Activated T-helper 1 cell treated with anti-CD3 and anti-CD28 coated beads, Interleukin-12 subunit alpha, Interleukin-12 subunit beta, Interleukin-2, Interleukin-4 antibody, amounts not matched to agents 30 ng/mL and 10 ng/mL and 1 ng/mL, durations not matched to agents 14 hours and 24 hours and 36 hours (primary cell): ENCODE measurements at regions of chr22 and their contacts with region 1.

Region 1: GRCh38 chr22:49767355-49768062 is 60.2 kb downstream of the BRD1 start:
- DNase-seq: peak; percentile 28
- H3K4me3 Mint-ChIP-seq: no peak overlapping the region
- H3K27ac Mint-ChIP-seq: no peak overlapping the region
- H3K4me1 Mint-ChIP-seq: peaks cover 9% of the 10 kb centered on the region
- H3K27me3 Mint-ChIP-seq: no peaks in the 10 kb centered on the region

Region 2: DNA sequence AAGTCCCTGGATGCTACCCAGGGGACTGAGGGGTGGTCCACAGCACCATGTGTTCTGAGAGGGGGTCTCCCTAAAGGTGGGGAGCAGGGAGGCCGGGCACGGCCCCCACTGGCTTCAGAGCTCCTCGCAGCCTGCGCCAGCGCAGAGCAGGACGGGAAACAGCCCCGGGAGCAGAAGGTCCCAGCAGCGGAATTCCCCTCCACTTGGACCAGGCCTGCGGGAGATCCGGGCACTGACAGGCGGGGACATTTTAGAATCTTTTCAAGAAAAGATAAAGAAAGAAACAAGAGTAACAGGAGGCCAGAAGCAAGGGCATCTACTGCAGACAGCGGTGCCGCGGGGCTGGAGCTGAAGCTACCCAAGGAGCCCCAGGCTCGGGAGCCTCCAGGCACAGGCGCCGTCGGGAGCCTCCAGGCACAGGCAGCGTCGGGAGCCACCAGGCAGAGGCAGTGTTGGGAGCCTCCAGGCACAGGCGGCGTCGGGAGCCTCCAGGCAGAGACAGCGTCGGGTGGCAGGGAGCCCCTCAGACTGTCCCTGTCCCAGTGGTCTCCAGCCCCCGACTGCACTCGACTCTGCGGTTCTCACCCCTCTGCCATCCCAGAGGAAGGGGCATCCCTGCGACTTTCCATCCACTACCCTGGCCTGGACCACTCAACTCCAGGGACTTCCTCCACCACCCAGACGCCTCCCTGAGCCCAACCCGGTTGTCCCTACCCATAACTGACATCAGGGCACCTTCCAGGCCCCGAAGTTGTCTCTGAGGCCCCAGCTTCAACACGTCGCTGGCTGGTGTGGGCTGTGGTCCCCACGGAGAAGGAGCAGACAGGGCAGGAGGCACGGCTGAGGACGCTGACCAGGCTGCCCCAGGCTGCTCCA is 150.9 kb before region 1 on chr22:
- intact Hi-C with region 1: no loop called
- DNase-seq: no peak
- H3K4me3 Mint-ChIP-seq: no peak overlapping the region
- H3K27ac Mint-ChIP-seq: no peak overlapping the region
- H3K4me1 Mint-ChIP-seq: no peaks in the 10 kb centered on the region
- H3K27me3 Mint-ChIP-seq: peaks cover 1% of the 10 kb centered on the region

Region 3: GRCh38 chr22:49807780-49808708 is 40.5 kb after region 1 on chr22:
- intact Hi-C with region 1: loop called (anchors 5 kb)
- DNase-seq: peak; percentile 48
- H3K4me3 Mint-ChIP-seq: peak overlapping the region; percentile 70
- H3K27ac Mint-ChIP-seq: peak overlapping the region; percentile 80
- H3K4me1 Mint-ChIP-seq: peaks cover 63% of the 10 kb centered on the region
- H3K27me3 Mint-ChIP-seq: no peaks in the 10 kb centered on the region

Region 4: DNA sequence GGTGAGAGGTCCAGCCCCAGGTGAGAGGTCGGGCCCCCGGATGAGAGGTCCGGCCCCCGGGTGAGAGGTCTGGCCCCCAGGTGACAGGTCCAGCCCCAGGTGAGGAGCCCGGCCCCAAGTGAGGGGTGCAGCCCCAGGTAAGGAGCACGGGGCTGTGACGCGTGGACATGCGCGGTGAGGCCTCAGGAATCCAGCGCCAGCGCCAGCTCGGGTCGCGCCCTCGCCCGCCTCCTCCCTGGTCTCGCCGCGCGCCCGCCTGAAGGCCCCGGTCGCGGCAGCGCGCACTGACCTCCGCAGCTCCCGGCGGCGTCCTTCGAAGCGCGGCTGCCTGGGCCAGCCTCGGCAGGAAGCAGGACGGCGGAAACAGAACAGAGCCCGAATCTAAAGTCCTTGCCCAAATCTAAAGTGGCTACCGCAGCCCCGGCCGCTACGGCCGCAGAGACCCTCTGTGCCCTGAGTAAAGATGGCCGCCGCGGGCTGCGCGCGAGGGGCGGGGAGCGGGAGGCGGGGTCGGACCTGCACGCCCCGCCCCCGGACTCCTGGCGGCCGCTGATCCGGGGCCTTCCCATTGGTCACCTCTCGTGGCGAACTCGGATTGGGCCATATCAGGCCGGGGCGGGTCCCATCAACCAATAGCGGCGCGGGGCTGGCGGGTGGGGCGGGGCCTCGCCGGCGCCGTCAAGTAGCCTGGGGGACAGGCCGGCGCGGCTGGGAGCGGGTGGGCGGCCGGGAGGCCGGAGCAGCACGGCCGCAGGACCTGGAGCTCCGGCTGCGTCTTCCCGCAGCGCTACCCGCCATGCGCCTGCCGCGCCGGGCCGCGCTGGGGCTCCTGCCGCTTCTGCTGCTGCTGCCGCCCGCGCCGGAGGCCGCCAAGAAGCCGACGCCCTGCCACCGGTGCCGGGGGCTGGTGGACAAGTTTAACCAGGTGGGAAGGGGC is 150.7 kb after region 1 on chr22 and contains the starts of genes ALG12 and CRELD2:
- intact Hi-C with region 1: loop called (anchors 1 kb)
- DNase-seq: peak; percentile 96
- H3K4me3 Mint-ChIP-seq: peak within 1 kb of the TSS; percentile 89
- H3K27ac Mint-ChIP-seq: peak within 1 kb of the TSS; percentile 87
- H3K4me1 Mint-ChIP-seq: peaks cover 16% of the 10 kb centered on the region
- H3K27me3 Mint-ChIP-seq: no peaks in the 10 kb centered on the region
- total RNA-seq, gene ALG12: 13.1 and 18.5 TPM in 2 replicates
- total RNA-seq, gene CRELD2: 48.1 and 51.0 TPM in 2 replicates

Region 5: DNA sequence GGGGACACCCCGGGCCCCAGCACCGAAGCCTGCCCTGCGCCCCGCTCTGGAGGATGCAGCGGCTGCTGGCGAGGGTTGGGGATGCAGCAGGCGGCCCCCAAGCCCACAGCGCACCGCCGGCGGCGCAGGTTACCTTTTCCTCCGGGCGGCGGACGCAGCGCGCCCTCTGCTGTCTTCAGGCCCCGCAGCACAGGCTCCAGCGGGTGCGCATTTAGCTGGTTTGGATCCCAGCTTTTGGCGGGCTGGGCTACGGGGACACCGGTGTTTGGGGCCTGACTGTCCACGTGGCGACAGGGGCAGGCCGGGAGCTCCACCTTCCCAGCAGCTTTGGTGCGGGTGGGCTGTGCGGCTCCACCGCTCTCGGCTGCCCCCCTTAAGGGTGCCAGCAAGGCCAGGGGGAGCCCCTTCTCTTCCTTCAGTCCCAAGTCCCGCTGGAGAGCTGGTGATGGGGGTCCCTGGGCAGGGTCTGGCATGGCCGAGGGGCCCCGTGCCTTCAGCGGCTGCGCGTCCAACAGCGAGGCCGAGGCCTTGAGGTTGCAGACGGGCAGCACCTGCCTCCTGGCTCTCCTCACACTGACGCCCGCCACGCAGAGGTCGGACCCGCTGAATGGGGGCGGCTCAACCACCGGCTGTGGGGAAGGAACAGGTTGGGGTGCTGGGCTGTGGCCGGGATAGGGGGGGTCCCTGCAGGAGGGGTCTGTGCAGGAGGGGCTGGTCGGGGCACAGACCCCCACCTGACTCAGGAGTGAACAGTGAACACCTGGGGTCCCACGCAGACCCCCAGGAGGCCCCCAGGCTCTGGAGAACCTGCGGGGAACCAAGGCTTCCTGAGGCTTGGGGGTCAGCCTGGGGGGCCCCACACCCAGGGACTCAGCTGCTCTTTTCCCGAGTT is 263.0 kb after region 1 on chr22:
- intact Hi-C with region 1: loop called (anchors 1 kb)
- DNase-seq: peak; percentile 76
- H3K4me3 Mint-ChIP-seq: no peak overlapping the region
- H3K27ac Mint-ChIP-seq: no peak overlapping the region
- H3K4me1 Mint-ChIP-seq: peaks cover 8% of the 10 kb centered on the region
- H3K27me3 Mint-ChIP-seq: peaks cover 5% of the 10 kb centered on the region

Region 6: GRCh38 chr22:50190182-50190940 is 422.9 kb after region 1 on chr22:
- intact Hi-C with region 1: no loop called
- DNase-seq: peak; percentile 81
- H3K4me3 Mint-ChIP-seq: peak overlapping the region; percentile 87
- H3K27ac Mint-ChIP-seq: peak overlapping the region; percentile 98
- H3K4me1 Mint-ChIP-seq: peaks cover 32% of the 10 kb centered on the region
- H3K27me3 Mint-ChIP-seq: no peaks in the 10 kb centered on the region

Region 7: DNA sequence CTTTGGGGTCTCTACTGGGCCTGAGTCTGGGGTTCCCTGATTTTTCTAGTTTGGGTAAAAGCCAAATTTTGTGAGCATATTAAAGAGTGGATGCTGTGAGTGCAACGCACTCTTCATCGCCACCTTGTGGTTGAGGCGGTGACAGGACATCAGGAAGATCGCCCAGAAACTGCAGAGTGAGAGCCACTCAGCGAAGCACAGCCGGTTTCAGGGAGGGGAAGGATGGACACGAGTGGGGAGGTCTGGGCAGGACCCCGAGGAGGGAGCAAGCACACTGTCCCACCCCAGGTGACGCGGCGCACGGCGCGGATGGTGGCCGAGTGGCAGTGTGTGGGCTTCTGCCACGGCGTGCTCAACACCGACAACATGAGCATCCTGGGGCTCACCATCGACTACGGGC is 442.4 kb after region 1 on chr22:
- intact Hi-C with region 1: loop called (anchors 1 kb)
- DNase-seq: no peak
- H3K4me3 Mint-ChIP-seq: no peak overlapping the region
- H3K27ac Mint-ChIP-seq: no peak overlapping the region
- H3K4me1 Mint-ChIP-seq: peaks cover 5% of the 10 kb centered on the region
- H3K27me3 Mint-ChIP-seq: no peaks in the 10 kb centered on the region